ENCODE measurements at regions of chr1 and their contacts with region 1.

Region 1: DNA sequence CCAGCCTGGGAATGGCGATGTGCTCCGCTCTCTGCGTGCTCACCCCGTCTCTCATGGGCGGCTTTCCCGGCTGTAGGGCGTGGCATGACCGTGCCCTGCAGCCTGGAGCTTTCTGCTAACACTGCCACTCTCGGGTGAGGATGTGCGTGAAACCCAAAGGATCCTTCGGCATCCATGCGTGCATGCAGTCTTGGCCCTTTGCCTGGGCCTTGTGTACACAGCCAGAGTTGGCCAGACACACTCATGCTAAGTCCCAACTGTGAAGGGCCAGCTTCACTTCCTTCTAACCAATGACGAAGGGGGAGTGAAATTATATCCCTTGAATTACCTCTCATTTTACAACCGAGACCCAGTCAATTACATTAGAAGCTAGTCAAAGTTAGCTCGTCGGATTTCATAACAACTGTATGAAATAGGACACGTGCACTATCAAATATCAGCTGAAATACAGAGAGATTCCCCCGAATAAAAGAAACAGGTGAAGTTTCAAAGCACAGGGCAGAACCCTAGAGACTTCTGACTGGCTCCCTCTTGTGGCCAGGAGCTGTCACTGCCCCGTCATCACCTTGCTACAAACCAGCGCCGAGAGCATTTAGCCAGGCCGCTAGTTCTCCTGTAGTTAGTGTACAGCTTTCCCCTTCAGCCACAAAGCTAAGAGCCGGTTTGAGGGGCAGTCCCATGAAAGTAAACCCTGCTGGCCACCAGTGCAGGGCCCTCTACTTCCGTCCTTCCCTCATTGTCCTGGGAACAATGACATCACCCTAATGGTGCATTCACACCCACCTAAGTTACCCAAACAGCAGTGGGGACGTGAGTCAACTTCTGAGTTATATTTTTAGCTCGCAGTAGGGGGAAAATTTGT is 63.4 kb upstream of the COA6 start:
- DNase-seq: peak; percentile 82
- H3K4me3 Mint-ChIP-seq: no peak overlapping the region
- H3K27ac Mint-ChIP-seq: no peak overlapping the region
- H3K4me1 Mint-ChIP-seq: peaks cover 33% of the 10 kb centered on the region
- H3K27me3 Mint-ChIP-seq: peaks cover 2% of the 10 kb centered on the region

Region 2: GRCh38 chr1:234125283-234125682 is 184.5 kb before region 1 on chr1:
- CTCF ChIA-PET with region 1: interaction called, 32 read pairs
- POLR2A ChIA-PET with region 1: no interaction called
- DNase-seq: peak; percentile 45
- H3K4me3 Mint-ChIP-seq: no peak overlapping the region
- H3K27ac Mint-ChIP-seq: no peak overlapping the region
- H3K4me1 Mint-ChIP-seq: no peaks in the 10 kb centered on the region
- H3K27me3 Mint-ChIP-seq: peaks cover 20% of the 10 kb centered on the region

Region 3: DNA sequence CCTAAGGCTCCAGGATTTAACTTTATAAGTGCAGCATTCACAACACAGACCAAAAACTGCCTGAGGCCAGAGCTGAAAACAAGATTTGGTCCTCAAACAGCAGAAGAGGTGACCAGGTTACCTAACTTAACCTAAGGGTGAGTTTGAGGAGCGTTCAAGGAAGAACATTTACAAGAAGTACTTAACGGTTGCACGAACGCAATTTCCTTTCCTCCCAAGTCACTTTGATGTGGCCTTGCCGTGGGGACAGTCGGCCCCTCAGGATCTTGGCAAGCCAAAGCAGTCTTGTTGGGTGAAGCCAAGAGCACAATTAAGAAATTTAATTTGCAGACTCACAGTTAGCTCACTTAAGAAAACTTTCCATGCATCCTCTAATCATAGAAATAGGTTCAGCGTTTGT is 139.2 kb before region 1 on chr1:
- CTCF ChIA-PET with region 1: interaction called, 10 read pairs
- POLR2A ChIA-PET with region 1: no interaction called
- DNase-seq: peak; percentile 32
- H3K4me3 Mint-ChIP-seq: peak overlapping the region; percentile 28
- H3K27ac Mint-ChIP-seq: peak overlapping the region; percentile 86
- H3K4me1 Mint-ChIP-seq: peaks cover 58% of the 10 kb centered on the region
- H3K27me3 Mint-ChIP-seq: no peaks in the 10 kb centered on the region

Region 4: GRCh38 chr1:234212764-234213657 is 96.8 kb before region 1 on chr1:
- CTCF ChIA-PET with region 1: interaction called, 28 read pairs
- POLR2A ChIA-PET with region 1: no interaction called
- DNase-seq: peak; percentile 38
- H3K4me3 Mint-ChIP-seq: peak overlapping the region; percentile 74
- H3K27ac Mint-ChIP-seq: peak overlapping the region; percentile 58
- H3K4me1 Mint-ChIP-seq: peaks cover 35% of the 10 kb centered on the region
- H3K27me3 Mint-ChIP-seq: peaks cover 12% of the 10 kb centered on the region

Region 5: GRCh38 chr1:234276151-234276788 is 33.6 kb before region 1 on chr1:
- CTCF ChIA-PET with region 1: interaction called, 12 read pairs
- POLR2A ChIA-PET with region 1: no interaction called
- DNase-seq: no peak
- H3K4me3 Mint-ChIP-seq: no peak overlapping the region
- H3K27ac Mint-ChIP-seq: no peak overlapping the region
- H3K4me1 Mint-ChIP-seq: peaks cover 12% of the 10 kb centered on the region
- H3K27me3 Mint-ChIP-seq: no peaks in the 10 kb centered on the region

Region 6: DNA sequence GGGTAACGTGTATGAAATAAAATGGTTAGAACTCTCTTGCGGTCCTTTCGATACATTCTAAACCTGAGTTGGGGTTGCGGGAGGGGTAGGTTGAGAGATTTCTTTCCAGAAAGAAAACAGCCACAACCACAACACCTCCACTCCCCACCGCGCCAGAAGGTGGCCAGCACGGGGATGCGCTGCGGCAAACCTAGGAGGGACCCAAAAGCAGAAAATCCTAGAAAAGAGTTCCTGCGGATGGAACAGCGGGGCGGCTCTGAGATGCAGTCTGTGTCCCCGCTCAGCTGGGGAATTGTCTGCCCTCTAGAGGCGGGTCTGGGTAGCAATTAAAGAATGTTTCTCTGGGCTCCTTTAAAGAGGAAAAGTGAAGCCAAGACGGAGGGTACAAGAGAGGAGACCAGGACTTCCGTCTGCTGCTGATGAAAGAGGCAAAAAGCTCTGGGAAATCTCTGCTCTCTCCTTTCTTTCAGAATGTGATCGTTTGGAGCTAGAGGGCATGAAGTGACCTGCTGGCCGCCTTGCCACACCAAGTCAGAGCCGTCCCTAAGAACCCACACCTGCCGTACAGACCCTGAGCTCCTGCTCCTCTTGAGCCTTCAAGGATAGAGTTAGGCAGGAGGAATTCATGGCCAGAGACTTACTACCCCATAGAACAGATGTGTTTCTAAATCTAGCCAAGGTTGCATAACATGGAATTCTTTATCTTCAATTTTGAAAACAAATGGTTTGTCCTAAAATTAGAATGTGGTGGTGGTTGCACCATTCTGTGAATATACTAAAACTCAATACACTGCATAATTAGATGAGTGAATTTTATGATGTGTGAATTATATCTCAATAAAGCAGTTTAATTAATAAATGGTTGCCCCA is 16.9 kb after region 1 on chr1:
- CTCF ChIA-PET with region 1: interaction called, 18 read pairs
- POLR2A ChIA-PET with region 1: no interaction called
- DNase-seq: peak; percentile 78
- H3K4me3 Mint-ChIP-seq: peak overlapping the region; percentile 73
- H3K27ac Mint-ChIP-seq: peak overlapping the region; percentile 78
- H3K4me1 Mint-ChIP-seq: peaks cover 24% of the 10 kb centered on the region
- H3K27me3 Mint-ChIP-seq: peaks cover 7% of the 10 kb centered on the region